Activated naive CD4-positive, alpha-beta T cell treated with anti-CD3 and anti-CD28 coated beads, Interleukin-2, amount 10 ng/mL, durations not matched to agents 7 days and 5 days (primary cell): ENCODE measurements at regions of chr5 and their contacts with region 1.

Region 1: DNA sequence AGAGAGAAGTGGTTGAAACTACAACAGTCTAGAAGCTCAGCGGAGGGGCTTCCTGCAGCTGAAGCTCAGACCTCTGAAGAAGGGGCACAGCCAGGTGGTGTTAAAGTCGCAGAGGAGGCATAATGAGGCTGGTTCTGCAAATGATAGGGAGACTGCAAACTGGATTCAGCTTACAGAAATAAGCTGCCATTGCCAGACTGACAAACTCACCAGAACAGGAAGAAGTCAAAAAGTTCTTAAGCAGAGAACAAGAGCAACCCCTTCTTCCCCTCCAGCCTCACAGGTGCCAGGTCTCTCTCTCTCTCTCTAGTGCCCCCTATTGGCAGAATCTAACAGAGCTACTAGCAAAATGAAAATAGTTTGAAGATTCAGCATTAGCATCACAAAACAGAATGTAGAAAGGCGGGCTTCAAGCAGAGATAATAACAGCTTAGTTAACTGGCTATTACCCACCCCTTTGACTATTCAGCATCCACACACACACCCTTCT is 76.7 kb downstream of the GRAMD2B start:
- DNase-seq: peak; percentile 43
- H3K4me3 Mint-ChIP-seq: no peak overlapping the region
- H3K27ac Mint-ChIP-seq: peak overlapping the region; percentile 2
- H3K4me1 Mint-ChIP-seq: peaks cover 6% of the 10 kb centered on the region
- H3K27me3 Mint-ChIP-seq: no peaks in the 10 kb centered on the region

Region 2: GRCh38 chr5:126339215-126339805 is 160.6 kb before region 1 on chr5:
- CTCF ChIA-PET with region 1: interaction called, 34 read pairs
- DNase-seq: peak; percentile 63
- H3K4me3 Mint-ChIP-seq: no peak overlapping the region
- H3K27ac Mint-ChIP-seq: no peak overlapping the region
- H3K4me1 Mint-ChIP-seq: no peaks in the 10 kb centered on the region
- H3K27me3 Mint-ChIP-seq: peaks cover 16% of the 10 kb centered on the region

Region 3: GRCh38 chr5:126446498-126447224 is 53.2 kb before region 1 on chr5:
- CTCF ChIA-PET with region 1: interaction called, 14 read pairs
- DNase-seq: peak; percentile 39
- H3K4me3 Mint-ChIP-seq: no peak overlapping the region
- H3K27ac Mint-ChIP-seq: peak overlapping the region; percentile 57
- H3K4me1 Mint-ChIP-seq: peaks cover 76% of the 10 kb centered on the region
- H3K27me3 Mint-ChIP-seq: no peaks in the 10 kb centered on the region

Region 4: GRCh38 chr5:126512451-126512850 is 12.6 kb after region 1 on chr5:
- CTCF ChIA-PET with region 1: interaction called, 26 read pairs
- DNase-seq: no peak
- H3K4me3 Mint-ChIP-seq: no peak overlapping the region
- H3K27ac Mint-ChIP-seq: no peak overlapping the region
- H3K4me1 Mint-ChIP-seq: peaks cover 25% of the 10 kb centered on the region
- H3K27me3 Mint-ChIP-seq: no peaks in the 10 kb centered on the region

Region 5: DNA sequence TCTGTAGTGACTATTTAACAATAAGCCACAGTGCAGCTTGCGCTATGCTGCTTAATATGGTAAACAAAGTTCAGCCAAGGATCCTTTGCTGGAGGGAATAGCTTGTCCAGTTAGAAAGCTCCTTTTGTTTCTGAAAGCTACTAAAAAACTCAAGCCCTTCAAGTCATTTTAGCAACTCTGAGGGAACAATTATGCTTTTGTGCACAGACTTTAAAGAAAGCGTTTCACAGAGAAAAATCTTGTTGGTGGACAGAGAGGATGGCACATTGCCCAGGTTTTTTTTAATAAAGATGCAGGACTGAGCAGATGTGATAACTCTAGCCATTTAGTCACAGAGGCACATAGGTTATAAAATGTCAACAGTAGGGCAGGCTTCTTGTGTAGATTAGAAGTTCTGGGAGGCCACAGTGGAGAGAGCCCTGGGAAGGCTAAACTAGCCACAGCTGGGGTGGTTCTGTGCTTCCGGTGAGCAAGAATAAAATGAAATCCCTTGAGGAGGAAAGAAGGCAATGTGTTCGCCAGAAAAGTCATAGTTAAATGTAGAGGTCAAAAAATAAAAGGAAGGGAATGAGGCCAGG is 31.7 kb after region 1 on chr5:
- CTCF ChIA-PET with region 1: interaction called, 15 read pairs
- DNase-seq: no peak
- H3K4me3 Mint-ChIP-seq: no peak overlapping the region
- H3K27ac Mint-ChIP-seq: no peak overlapping the region
- H3K4me1 Mint-ChIP-seq: no peaks in the 10 kb centered on the region
- H3K27me3 Mint-ChIP-seq: peaks cover 8% of the 10 kb centered on the region

Region 6: GRCh38 chr5:127280491-127281220 is 780.8 kb after region 1 on chr5:
- CTCF ChIA-PET with region 1: no interaction called
- DNase-seq: no peak
- H3K4me3 Mint-ChIP-seq: no peak overlapping the region
- H3K27ac Mint-ChIP-seq: no peak overlapping the region
- H3K4me1 Mint-ChIP-seq: peaks cover 2% of the 10 kb centered on the region
- H3K27me3 Mint-ChIP-seq: peaks cover 11% of the 10 kb centered on the region